CD8-positive, alpha-beta T cell (primary cell): ENCODE measurements at regions of chr1 and their contacts with region 1.

Region 1: GRCh38 chr1:81375884-81376548 is 424.7 kb upstream of the ADGRL2 start:
- DNase-seq: no peak
- ATAC-seq: no peak
- H3K4me3 ChIP-seq: no peak overlapping the region
- H3K4me3 Mint-ChIP-seq: no peak overlapping the region
- H3K27ac ChIP-seq: no peak overlapping the region
- H3K27ac Mint-ChIP-seq: no peak overlapping the region
- H3K4me1 ChIP-seq: no peaks in the 10 kb centered on the region
- H3K4me1 Mint-ChIP-seq: no peaks in the 10 kb centered on the region
- H3K27me3 ChIP-seq: no peaks in the 10 kb centered on the region
- H3K27me3 Mint-ChIP-seq: no peaks in the 10 kb centered on the region
- CTCF ChIP-seq: no peak

Region 2: GRCh38 chr1:81345110-81345509 is 30.9 kb before region 1 on chr1:
- CTCF ChIA-PET with region 1: no interaction called
- POLR2A ChIA-PET with region 1: no interaction called
- intact Hi-C with region 1: loop called in 1 of 2 experiments (anchors 1 kb)
- DNase-seq: no peak
- ATAC-seq: no peak
- H3K4me3 ChIP-seq: no peak overlapping the region
- H3K4me3 Mint-ChIP-seq: no peak overlapping the region
- H3K27ac ChIP-seq: no peak overlapping the region
- H3K27ac Mint-ChIP-seq: no peak overlapping the region
- H3K4me1 ChIP-seq: no peaks in the 10 kb centered on the region
- H3K4me1 Mint-ChIP-seq: no peaks in the 10 kb centered on the region
- H3K27me3 ChIP-seq: no peaks in the 10 kb centered on the region
- H3K27me3 Mint-ChIP-seq: no peaks in the 10 kb centered on the region
- CTCF ChIP-seq: no peak